T-cell (primary cell): ENCODE measurements at regions of chr7 and their contacts with region 1.

Region 1: GRCh38 chr7:152336754-152337368 is 98.9 kb downstream of the KMT2C start:
- DNase-seq: peak in 12 of 35 experiments; percentile 1 to 64 (median 8)
- ATAC-seq: peak; percentile 68 to 79 (median 74)
- H3K4me3 ChIP-seq: no peak overlapping the region
- H3K4me3 Mint-ChIP-seq: peak overlapping the region; percentile 49 to 76 (median 63)
- H3K27ac ChIP-seq: no peak overlapping the region
- H3K27ac Mint-ChIP-seq: peak overlapping the region; percentile 82 to 90
- H3K4me1 ChIP-seq: peaks cover 10 to 19% of the 10 kb centered on the region in 2 experiments
- H3K4me1 Mint-ChIP-seq: peaks cover 69 to 78% (median 71%) of the 10 kb centered on the region in 3 donors
- H3K27me3 ChIP-seq: no peaks in the 10 kb centered on the region
- H3K27me3 Mint-ChIP-seq: no peaks in the 10 kb centered on the region

Region 2: GRCh38 chr7:152158801-152159587 is 177.9 kb before region 1 on chr7:
- CTCF ChIA-PET with region 1: interaction called in 1 of 2 experiments, 12 read pairs
- POLR2A ChIA-PET with region 1: no interaction called
- DNase-seq: no peak
- ATAC-seq: peak in 3 of 4 experiments; percentile 35 to 59 (median 41)
- H3K4me3 ChIP-seq: no peak overlapping the region
- H3K4me3 Mint-ChIP-seq: peak overlapping the region; percentile 13 to 47 (median 25)
- H3K27ac ChIP-seq: no peak overlapping the region
- H3K27ac Mint-ChIP-seq: peak overlapping the region; percentile 69 to 86
- H3K4me1 ChIP-seq: no peaks in the 10 kb centered on the region
- H3K4me1 Mint-ChIP-seq: peaks cover 9 to 21% (median 11%) of the 10 kb centered on the region in 3 donors
- H3K27me3 ChIP-seq: no peaks in the 10 kb centered on the region
- H3K27me3 Mint-ChIP-seq: no peaks in the 10 kb centered on the region

Region 3: GRCh38 chr7:152707766-152708165 is 370.9 kb after region 1 on chr7:
- CTCF ChIA-PET with region 1: interaction called, 5 to 11 read pairs
- POLR2A ChIA-PET with region 1: interaction called in 1 of 2 experiments, 3 read pairs
- DNase-seq: no peak
- ATAC-seq: no peak
- H3K4me3 ChIP-seq: no peak overlapping the region
- H3K4me3 Mint-ChIP-seq: no peak overlapping the region
- H3K27ac ChIP-seq: no peak overlapping the region
- H3K27ac Mint-ChIP-seq: no peak overlapping the region
- H3K4me1 ChIP-seq: no peaks in the 10 kb centered on the region
- H3K4me1 Mint-ChIP-seq: peaks cover 0 to 4% (median 0%) of the 10 kb centered on the region in 3 donors
- H3K27me3 ChIP-seq: peaks cover 0 to 5% of the 10 kb centered on the region in 2 experiments
- H3K27me3 Mint-ChIP-seq: peaks cover 5 to 7% of the 10 kb centered on the region in 2 donors